A549 (cell line): ENCODE measurements at regions of chr5 and their contacts with region 1.

Region 1: GRCh38 chr5:150217873-150218692 is 28.2 kb downstream of the SLC6A7 start:
- DNase-seq: peak; percentile 81 to 86
- ATAC-seq: peak; percentile 89 to 97
- H3K4me3 ChIP-seq: no peak overlapping the region
- H3K27ac ChIP-seq: 0 out of 6 replicates have a peak overlapping the region, but pooled peaks of 1 of the 2 experiments have one; percentile 28
- H3K4me1 ChIP-seq: no peaks in the 10 kb centered on the region
- CTCF ChIP-seq: peak; percentile 90
- EP300 ChIP-seq: no peak
- POLR2A ChIP-seq: no peak
- RAD21 ChIP-seq: peak; percentile 92 to 94

Region 2: GRCh38 chr5:150129813-150130492 is 88.1 kb before region 1 on chr5:
- CTCF ChIA-PET with region 1: interaction called, 82 read pairs
- POLR2A ChIA-PET with region 1: no interaction called
- DNase-seq: peak; percentile 71 to 94
- ATAC-seq: peak; percentile 76 to 93
- H3K4me3 ChIP-seq: no peak overlapping the region
- H3K27ac ChIP-seq: peak overlapping the region; percentile 39 to 76; a peak in 5 of 6 replicates
- H3K4me1 ChIP-seq: peaks cover 4% of the 10 kb centered on the region; the same call in 2 of the 3 replicates
- CTCF ChIP-seq: peak; percentile 96
- EP300 ChIP-seq: no peak
- POLR2A ChIP-seq: no peak
- RAD21 ChIP-seq: peak; percentile 97

Region 3: DNA sequence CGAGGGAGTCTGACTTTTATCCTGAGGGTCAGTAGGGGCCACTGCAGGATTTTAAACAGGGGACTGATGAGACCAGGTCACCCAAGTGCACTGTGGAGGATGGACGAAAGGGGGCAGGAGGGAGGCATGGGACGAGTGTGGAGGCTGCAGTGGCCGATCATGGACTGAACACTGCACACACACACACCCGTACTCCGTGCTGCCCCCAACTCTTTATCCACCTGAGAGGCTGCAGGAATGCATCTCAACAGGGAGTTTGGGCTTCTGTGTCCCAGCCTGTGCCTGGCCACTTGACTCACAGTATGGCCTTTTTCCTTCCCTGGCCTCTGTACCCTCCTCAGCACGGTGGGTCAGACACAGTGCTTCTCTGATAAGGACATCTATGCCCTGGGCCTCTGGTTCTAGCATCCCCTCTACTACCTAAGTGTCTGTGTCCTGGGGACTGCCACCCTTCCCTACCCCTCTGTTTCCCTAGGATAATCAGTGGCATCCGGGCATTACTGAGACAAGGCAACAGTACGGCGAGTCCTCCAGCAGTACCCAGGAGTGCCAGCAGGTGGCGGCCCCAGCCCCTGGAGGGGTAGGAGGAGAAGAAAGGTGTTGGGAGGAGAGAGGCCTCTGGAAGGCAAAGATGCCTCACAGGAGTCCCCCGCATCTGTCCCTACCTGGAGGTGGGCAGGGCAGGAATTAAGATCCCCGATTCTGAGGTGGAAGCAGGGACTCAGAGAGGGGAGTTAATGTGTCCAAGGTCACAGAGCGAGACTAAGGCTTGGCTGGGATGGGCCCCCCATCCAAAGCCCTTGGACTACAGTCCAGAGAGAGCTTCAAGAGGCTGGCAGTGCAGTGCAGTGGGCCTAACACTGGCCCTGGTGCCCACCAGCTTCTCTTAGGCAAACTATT is 56.6 kb before region 1 on chr5:
- CTCF ChIA-PET with region 1: interaction called, 140 read pairs
- POLR2A ChIA-PET with region 1: no interaction called
- DNase-seq: peak; percentile 82 to 92
- ATAC-seq: peak; percentile 89 to 95
- H3K4me3 ChIP-seq: peak overlapping the region; percentile 37
- H3K27ac ChIP-seq: peak overlapping the region; percentile 75 to 79
- H3K4me1 ChIP-seq: peaks cover 8% of the 10 kb centered on the region; the same call in 1 of the 3 replicates
- CTCF ChIP-seq: peak; percentile 67
- EP300 ChIP-seq: no peak
- POLR2A ChIP-seq: no peak
- RAD21 ChIP-seq: peak; percentile 70 to 87

Region 4: GRCh38 chr5:150175076-150175935 is 42.8 kb before region 1 on chr5:
- CTCF ChIA-PET with region 1: interaction called, 17 read pairs
- POLR2A ChIA-PET with region 1: no interaction called
- DNase-seq: peak; percentile 53 to 81
- ATAC-seq: peak; percentile 72 to 96
- H3K4me3 ChIP-seq: no peak overlapping the region
- H3K27ac ChIP-seq: no peak overlapping the region
- H3K4me1 ChIP-seq: no peaks in the 10 kb centered on the region
- CTCF ChIP-seq: peak; percentile 38
- EP300 ChIP-seq: no peak
- POLR2A ChIP-seq: no peak
- RAD21 ChIP-seq: peak in 1 of 2 experiments; percentile 42; a peak in 2 of 5 replicates

Region 5: GRCh38 chr5:150196514-150196913 is 21.6 kb before region 1 on chr5:
- CTCF ChIA-PET with region 1: interaction called, 13 read pairs
- POLR2A ChIA-PET with region 1: no interaction called
- DNase-seq: no peak
- ATAC-seq: no peak
- H3K4me3 ChIP-seq: no peak overlapping the region
- H3K27ac ChIP-seq: no peak overlapping the region
- H3K4me1 ChIP-seq: no peaks in the 10 kb centered on the region
- CTCF ChIP-seq: no peak
- EP300 ChIP-seq: no peak
- POLR2A ChIP-seq: no peak
- RAD21 ChIP-seq: no peak